Esophagus squamous epithelium (tissue), 5 donors: ENCODE measurements at regions of chr20 and their contacts with region 1.

Region 1: DNA sequence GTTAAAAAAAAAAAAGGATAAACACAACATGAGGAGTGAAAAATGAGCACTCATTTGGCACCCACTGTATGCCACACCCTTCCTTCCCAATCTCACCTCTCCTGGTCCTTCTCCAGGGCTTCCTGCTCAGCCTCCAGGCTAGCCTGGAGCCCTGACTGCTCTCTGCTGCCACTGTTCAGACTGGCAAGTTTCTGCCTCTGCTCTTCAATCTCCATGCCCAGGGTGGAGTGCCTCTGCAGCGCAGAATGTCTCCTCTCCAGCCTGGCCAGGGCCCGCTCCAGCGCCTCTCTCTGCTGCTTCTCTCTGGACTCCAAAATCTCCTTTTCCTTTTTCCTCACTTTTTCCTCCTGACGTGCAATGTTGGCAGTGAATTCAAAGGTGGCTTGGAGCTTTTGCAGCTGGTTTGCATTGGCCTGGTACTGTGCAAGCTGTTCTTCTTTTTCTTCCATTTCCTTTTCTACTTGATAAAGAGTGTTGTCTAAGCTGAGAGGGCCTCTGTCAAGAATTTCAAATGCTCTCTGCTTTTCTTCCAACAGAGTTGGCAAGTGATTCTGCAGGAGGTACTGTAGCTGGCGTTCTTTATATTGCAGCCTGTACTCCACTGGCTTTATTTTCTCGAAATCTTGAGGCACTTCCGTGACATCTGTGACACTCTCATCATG is 194.4 kb downstream of the KIF16B start:
- DNase-seq: no peak
- H3K4me3 ChIP-seq: no peak overlapping the region
- H3K27ac ChIP-seq: no peak overlapping the region
- H3K4me1 ChIP-seq: no peaks in the 10 kb centered on the region
- H3K27me3 ChIP-seq: no peaks in the 10 kb centered on the region
- CTCF ChIP-seq: no peak
- POLR2A ChIP-seq: no peak

Region 2: GRCh38 chr20:16314320-16314719 is 64.5 kb before region 1 on chr20:
- intact Hi-C with region 1: loop called (anchors 10 kb)
- DNase-seq: no peak
- H3K4me3 ChIP-seq: no peak overlapping the region
- H3K27ac ChIP-seq: no peak overlapping the region
- H3K4me1 ChIP-seq: no peaks in the 10 kb centered on the region
- H3K27me3 ChIP-seq: no peaks in the 10 kb centered on the region
- CTCF ChIP-seq: no peak
- POLR2A ChIP-seq: no peak

Region 3: DNA sequence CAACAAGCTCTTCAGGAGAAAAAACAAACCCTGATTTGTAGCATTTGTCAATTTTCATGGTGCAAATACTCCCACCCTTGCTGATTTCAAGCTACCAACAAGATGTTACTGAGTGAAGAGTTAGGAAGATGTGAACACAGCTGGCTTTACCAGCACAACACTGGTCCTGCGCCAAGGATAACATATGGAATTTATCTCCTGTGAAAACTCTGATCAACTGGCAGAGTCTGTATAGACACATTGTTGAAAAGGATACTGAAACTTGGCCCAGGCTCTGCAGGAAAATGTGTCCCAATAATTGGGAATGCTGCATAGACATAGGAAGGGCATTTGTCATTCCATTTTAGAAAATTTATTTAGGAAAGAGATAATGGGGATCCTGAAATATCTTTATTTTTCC is 398.3 kb after region 1 on chr20:
- intact Hi-C with region 1: no loop called
- DNase-seq: no peak
- H3K4me3 ChIP-seq: no peak overlapping the region
- H3K27ac ChIP-seq: no peak overlapping the region
- H3K4me1 ChIP-seq: no peaks in the 10 kb centered on the region
- H3K27me3 ChIP-seq: peaks cover 0 to 4% (median 0%) of the 10 kb centered on the region in 4 donors
- CTCF ChIP-seq: no peak
- POLR2A ChIP-seq: no peak